ENCODE measurements at regions of chr1 and their contacts with region 1.

Region 1: DNA sequence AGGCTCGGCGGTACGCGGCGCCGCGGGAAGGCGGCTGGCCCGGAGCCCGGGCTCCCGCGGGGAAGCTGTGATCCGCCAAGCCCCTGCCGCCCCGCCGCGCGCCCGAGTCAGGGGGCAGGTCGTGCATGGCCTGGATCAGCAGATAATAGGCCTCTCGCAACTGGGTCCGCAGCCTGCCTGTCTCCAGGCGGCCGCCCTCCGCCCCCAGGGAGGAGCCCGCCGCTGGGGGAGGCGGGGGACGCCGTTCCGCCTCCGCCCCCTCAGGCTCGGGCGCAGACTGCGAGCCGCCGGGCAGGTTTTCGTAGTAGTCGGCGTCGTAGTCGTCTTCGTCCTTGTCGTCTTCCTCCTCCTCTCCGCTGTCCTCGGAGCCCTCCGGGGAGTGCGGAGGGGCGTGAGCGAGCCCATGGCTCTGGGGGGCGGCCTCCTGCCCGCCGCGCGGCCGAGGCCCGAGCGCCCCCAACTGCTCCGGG is at the start of gene SYDE2:
- DNase-seq: peak; percentile 71
- H3K4me3 ChIP-seq: peak within 1 kb of the TSS; percentile 82 to 93 (median 87)
- H3K27ac ChIP-seq: peak within 1 kb of the TSS; percentile 60
- H3K4me1 ChIP-seq: peaks cover 10% of the 10 kb centered on the region
- H3K27me3 ChIP-seq: no peaks in the 10 kb centered on the region
- CTCF ChIP-seq: no peak
- total RNA-seq, gene SYDE2: 4.3 to 11.0 TPM

Region 2: GRCh38 chr1:85048296-85049064 is 152.4 kb before region 1 on chr1 and contains the start of gene MCOLN3:
- CTCF ChIA-PET with region 1: no interaction called
- dilution Hi-C with region 1: no loop called
- in situ Hi-C with region 1: no loop called
- intact Hi-C with region 1: loop called (anchors 5 kb)
- DNase-seq: peak; percentile 53
- H3K4me3 ChIP-seq: peak within 1 kb of the TSS; percentile 72 to 86 (median 86)
- H3K27ac ChIP-seq: peak within 1 kb of the TSS; percentile 33
- H3K4me1 ChIP-seq: peaks cover 5% of the 10 kb centered on the region
- H3K27me3 ChIP-seq: no peaks in the 10 kb centered on the region
- CTCF ChIP-seq: no peak
- total RNA-seq, gene MCOLN3: 17.0 to 21.2 TPM

Region 3: DNA sequence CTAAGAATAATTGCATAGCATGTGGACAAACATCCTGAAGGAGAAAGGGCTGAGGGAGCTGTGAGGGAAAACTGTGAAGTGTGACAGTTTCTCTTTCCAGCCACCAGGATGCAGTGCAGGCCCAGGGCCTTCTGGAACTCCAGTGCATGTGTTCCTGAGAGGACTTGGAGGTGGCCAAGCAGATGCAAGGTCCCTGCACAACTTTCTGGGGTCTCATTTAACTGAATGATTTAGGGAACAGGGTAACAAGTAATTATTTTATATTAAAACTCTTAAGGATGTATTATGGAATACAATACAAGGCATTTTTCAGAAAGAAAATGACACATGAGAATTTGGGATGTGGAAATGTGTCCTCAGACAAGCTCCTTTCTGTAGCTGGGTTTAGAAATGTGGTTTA is 91.4 kb before region 1 on chr1:
- CTCF ChIA-PET with region 1: no interaction called
- dilution Hi-C with region 1: no loop called
- in situ Hi-C with region 1: no loop called
- intact Hi-C with region 1: loop called (anchors 1 kb)
- DNase-seq: peak; percentile 35
- H3K4me3 ChIP-seq: no peak overlapping the region
- H3K27ac ChIP-seq: no peak overlapping the region
- H3K4me1 ChIP-seq: no peaks in the 10 kb centered on the region
- H3K27me3 ChIP-seq: no peaks in the 10 kb centered on the region
- CTCF ChIP-seq: peak; percentile 87 to 95

Region 4: DNA sequence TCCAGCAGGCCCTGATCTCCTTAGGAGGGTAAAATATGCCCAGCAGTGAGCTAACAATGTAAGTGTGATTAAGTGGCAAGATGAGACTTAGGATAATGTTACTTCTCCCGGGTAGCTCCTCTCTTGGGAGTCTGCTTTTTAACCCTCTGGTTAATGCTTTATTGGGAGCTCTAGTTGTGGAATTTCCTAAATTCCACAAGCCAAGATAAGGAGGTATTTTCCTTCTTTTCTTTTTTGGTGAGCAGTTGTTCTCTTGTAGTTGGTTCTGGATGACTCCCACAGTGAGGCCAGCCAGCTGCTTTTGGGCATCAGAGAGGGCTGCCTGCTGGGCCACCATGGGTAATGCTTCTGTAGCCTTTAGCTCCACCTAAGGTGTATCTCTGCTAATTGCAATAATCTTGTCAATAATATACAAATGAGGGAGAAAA is 39.3 kb after region 1 on chr1:
- CTCF ChIA-PET with region 1: no interaction called
- dilution Hi-C with region 1: no loop called
- in situ Hi-C with region 1: no loop called
- intact Hi-C with region 1: loop called (anchors 1 kb)
- DNase-seq: no peak
- H3K4me3 ChIP-seq: no peak overlapping the region
- H3K27ac ChIP-seq: no peak overlapping the region
- H3K4me1 ChIP-seq: peaks cover 9% of the 10 kb centered on the region
- H3K27me3 ChIP-seq: no peaks in the 10 kb centered on the region
- CTCF ChIP-seq: peak; percentile 24 to 55

Region 5: DNA sequence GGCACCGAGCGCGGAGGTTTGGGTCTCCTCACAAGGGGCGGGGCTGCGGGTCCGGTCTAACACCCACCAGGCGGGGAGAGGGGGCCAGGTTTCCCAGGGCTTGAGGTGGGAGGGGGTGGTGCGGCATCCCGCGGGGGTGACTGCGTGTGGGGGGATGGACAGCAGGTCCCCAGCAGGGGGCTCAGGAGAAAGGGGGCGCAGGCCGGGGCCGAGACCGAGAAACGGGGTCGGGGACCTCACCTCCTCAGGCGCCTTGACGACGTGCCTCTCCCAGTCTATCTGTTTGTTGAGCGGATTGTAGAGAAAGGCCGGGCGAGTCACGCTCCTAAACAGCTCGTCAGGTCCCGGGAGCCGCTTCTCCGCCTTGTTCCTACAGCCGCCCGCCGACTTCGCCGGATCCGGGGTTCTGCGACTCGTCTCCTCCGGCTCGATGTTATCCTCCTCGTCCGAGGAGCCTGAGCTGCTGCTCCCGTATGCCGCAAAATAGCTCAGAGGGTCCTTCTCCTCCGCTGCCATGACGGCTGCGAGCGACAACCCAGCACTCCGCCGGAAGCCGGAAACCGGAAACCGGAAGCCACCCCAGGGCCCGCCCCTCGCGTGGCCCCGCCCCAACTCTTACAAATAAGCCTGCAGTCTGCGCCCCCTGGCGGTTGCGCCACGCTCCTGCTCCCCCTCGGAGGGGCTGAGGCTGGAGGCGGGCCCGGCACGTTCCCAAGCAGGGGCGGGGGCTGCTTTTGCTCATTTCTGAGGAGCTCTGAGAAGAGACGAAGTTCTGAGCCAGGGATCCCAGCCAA is 58.4 kb after region 1 on chr1 and contains the start of gene C1orf52:
- CTCF ChIA-PET with region 1: no interaction called
- dilution Hi-C with region 1: no loop called
- in situ Hi-C with region 1: no loop called
- intact Hi-C with region 1: loop called (anchors 5 kb)
- DNase-seq: peak; percentile 81
- H3K4me3 ChIP-seq: peak within 1 kb of the TSS; percentile 74 to 96 (median 96)
- H3K27ac ChIP-seq: peak within 1 kb of the TSS; percentile 72
- H3K4me1 ChIP-seq: peaks cover 4% of the 10 kb centered on the region
- H3K27me3 ChIP-seq: no peaks in the 10 kb centered on the region
- CTCF ChIP-seq: peak; percentile 71 to 92
- total RNA-seq, gene C1orf52: 13.7 to 25.7 TPM

Region 6: DNA sequence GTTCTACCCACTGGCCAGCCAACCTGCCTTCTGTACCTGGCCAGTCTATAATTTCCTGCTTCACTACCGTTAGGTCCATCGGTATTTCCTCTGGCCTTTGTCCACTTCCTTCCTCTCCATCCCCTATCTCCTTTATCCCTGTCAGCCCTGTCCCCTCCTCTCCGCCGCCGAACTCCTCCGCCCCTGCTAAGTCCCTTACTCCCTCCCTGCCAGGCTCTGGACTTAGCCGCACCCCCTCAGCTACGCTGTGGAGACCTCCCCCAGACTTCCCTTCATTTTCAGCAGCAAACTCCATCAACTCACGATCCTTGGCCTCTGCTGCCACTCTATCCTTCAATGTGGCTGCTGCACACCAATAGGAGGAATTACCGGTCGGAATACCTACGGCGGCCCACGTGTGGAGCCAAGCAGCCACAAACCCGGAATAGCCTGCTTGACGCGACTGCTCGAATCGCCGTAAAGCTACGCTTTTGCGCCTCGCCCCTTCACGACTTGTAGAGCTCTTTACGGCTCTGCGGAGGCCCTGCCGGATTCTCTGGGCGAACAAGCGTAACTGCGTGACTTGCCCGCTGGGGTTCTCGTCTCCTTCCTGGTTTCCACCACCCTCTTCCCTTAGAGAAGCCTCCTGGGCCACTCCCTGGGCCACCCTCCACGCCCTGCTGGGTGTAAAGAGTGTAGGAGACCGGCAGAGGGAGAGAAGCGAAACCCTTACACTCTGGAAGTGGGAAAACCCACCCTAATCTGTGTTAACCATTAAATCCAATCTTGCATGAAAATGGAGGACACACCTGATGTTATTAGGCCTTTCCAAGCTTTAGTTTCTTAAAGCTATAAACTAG is 507.3 kb after region 1 on chr1 and contains the start of gene ZNHIT6:
- CTCF ChIA-PET with region 1: no interaction called
- dilution Hi-C with region 1: no loop called
- in situ Hi-C with region 1: no loop called
- intact Hi-C with region 1: loop called (anchors 5 kb)
- DNase-seq: peak; percentile 96
- H3K4me3 ChIP-seq: peak within 1 kb of the TSS; percentile 87 to 99 (median 88)
- H3K27ac ChIP-seq: peak within 1 kb of the TSS; percentile 53
- H3K4me1 ChIP-seq: peaks cover 12% of the 10 kb centered on the region
- H3K27me3 ChIP-seq: no peaks in the 10 kb centered on the region
- CTCF ChIP-seq: peak in 1 of 2 donors; percentile 42
- total RNA-seq, gene ZNHIT6: 8.5 to 22.5 TPM